ENCODE measurements at regions of chr17 and their contacts with region 1.

Region 1: GRCh38 chr17:72539981-72540897 is 419.4 kb downstream of the SOX9 start:
- DNase-seq: peak in 1 of 2 experiments; percentile 88
- H3K4me3 ChIP-seq: no peak overlapping the region
- H3K4me3 Mint-ChIP-seq: peak overlapping the region; percentile 41
- H3K27ac Mint-ChIP-seq: peak overlapping the region; percentile 53
- H3K4me1 ChIP-seq: peaks cover 5% of the 10 kb centered on the region; the same call in 1 of the 2 replicates
- H3K4me1 Mint-ChIP-seq: peaks cover 14% of the 10 kb centered on the region
- H3K27me3 ChIP-seq: no peaks in the 10 kb centered on the region
- H3K27me3 Mint-ChIP-seq: no peaks in the 10 kb centered on the region
- CTCF ChIP-seq: peak; percentile 76 to 92

Region 2: DNA sequence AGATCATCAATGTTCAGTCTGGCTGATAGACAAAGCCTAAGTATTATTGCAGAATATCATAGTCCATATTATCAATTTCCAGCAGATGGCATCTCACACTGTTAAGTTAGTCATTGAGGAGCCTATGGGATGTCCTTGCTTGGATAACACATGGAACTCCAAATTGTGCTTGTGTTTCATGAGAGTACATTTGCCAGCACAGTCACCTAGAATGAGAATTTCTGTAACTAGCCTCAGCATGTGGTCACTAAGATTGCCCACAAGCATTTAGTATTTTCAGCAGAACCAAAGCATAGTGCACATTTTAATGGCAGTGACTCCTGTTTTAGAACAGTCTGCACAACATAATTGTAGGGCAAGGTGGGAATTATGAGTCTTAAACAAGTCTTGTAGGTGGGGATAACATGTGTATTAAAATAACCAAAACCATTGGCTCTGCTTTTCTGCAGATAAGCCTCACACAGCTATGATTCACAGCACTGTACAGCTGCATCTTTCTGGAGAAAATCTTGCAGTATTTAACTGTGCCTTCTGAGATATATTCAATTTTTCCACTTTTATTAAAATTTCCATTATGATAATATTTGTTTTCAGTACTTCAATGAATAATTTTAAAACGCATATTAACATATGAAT is 1302.2 kb before region 1 on chr17:
- CTCF ChIA-PET with region 1: no interaction called
- POLR2A ChIA-PET with region 1: no interaction called
- intact Hi-C with region 1: loop called (anchors 10 kb)
- DNase-seq: peak in 1 of 2 experiments; percentile 11
- H3K4me3 ChIP-seq: no peak overlapping the region
- H3K4me3 Mint-ChIP-seq: no peak overlapping the region
- H3K27ac Mint-ChIP-seq: no peak overlapping the region
- H3K4me1 ChIP-seq: no peaks in the 10 kb centered on the region
- H3K4me1 Mint-ChIP-seq: no peaks in the 10 kb centered on the region
- H3K27me3 ChIP-seq: no peaks in the 10 kb centered on the region
- H3K27me3 Mint-ChIP-seq: peaks cover 2% of the 10 kb centered on the region
- CTCF ChIP-seq: peak in 1 of 2 experiments; percentile 18

Measured in Caco-2 (cell line).